ENCODE measurements at regions of chr18 and their contacts with region 1.

Region 1: DNA sequence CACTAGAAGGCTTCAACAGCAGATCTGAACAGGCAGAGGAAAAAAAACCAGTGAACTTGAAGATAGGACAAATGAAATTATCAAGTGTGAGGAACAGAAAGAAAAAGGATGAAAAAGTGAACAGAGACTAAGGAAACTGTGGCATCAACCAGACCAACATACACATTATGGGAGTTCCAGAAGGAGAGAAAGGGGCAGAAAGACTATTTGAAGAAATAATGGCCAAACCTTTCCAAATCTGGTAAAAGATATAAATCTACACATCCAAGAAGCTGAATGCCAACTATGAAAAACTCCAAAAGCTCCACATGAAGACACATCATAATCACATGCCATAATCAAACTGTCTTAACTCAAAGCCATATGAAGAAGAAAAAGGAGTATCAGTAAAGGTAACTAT is 79.8 kb downstream of the ROCK1 start:
- DNase-seq: no peak

Region 2: GRCh38 chr18:20988726-20989125 is 43.1 kb before region 1 on chr18:
- intact Hi-C with region 1: no loop called
- DNase-seq: no peak

Region 3: GRCh38 chr18:21085579-21086166 is 53.8 kb after region 1 on chr18:
- intact Hi-C with region 1: loop called (anchors 10 kb)
- DNase-seq: no peak

Region 4: DNA sequence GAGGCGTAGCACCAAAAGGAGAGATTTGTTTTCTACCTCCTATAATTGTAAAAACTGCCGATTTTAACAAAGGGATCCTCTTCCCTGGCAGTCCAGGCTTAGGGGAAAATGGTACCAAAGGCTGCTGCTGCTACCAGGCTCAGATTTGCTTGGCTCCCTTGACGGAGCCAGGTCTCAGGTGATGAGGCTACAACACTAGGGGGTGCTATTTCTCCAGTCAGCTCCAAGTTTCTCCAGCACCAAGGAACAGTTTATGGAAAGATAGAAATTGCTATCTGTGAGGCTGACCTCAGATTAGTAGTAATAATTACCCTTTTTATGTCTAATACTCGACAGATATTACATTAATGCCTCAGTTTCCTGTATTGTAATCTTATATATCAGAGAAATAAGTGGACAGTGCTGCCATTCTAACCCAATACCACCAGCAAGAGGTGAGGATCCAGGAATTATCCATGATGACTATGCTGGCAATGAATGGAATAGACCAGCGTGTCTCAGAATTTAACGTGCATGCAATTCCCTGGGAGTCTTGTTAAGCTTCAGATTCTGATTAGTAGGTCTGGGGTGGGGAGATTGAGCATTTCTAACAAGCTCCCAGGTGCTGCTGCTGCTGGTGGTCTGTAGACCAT is 457.4 kb after region 1 on chr18:
- intact Hi-C with region 1: no loop called
- DNase-seq: peak in 35 of 42 donors; percentile 23 to 81 (median 57)